WTC11 (cell line): ENCODE measurements at regions of chr16 and their contacts with region 1.

Region 1: DNA sequence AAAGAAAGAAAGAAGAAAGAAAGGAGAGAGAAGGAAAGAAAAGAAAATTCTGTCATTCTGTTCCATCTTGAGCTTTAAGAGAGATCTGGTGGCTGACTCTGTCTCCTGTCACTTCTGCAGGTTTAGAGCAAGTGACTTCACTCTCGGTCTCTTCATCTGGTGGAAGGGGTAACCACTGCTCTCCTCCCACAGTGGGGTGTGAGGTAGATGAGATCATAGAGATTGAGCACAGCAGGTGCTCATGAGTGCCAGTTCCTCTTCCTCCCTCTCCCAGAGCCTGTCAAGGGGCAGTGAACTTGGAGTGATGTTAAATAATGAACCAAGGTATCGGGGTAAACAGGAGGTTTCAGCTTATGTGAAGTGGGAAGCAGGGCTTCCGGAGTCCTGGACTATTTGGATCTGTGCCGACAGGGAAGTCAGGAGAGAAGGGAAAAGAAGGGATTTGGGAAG is 47.7 kb downstream of the BEAN1 start:
- DNase-seq: no peak
- ATAC-seq: no peak
- H3K4me3 Mint-ChIP-seq: no peak overlapping the region
- H3K27ac Mint-ChIP-seq: no peak overlapping the region
- H3K4me1 Mint-ChIP-seq: peaks cover 30% of the 10 kb centered on the region
- H3K27me3 Mint-ChIP-seq: peaks cover 8% of the 10 kb centered on the region; the same call in 1 of the 2 replicates
- CTCF ChIP-seq: no peak

Region 2: GRCh38 chr16:66382171-66382965 is 92.4 kb before region 1 on chr16:
- CTCF ChIA-PET with region 1: no interaction called
- POLR2A ChIA-PET with region 1: no interaction called
- DNase-seq: peak; percentile 16
- ATAC-seq: peak; percentile 63
- H3K4me3 Mint-ChIP-seq: no peak overlapping the region
- H3K27ac Mint-ChIP-seq: no peak overlapping the region; the same call in 1 of the 2 replicates
- H3K4me1 Mint-ChIP-seq: peaks cover 12% of the 10 kb centered on the region
- H3K27me3 Mint-ChIP-seq: no peaks in the 10 kb centered on the region
- CTCF ChIP-seq: no peak

Region 3: DNA sequence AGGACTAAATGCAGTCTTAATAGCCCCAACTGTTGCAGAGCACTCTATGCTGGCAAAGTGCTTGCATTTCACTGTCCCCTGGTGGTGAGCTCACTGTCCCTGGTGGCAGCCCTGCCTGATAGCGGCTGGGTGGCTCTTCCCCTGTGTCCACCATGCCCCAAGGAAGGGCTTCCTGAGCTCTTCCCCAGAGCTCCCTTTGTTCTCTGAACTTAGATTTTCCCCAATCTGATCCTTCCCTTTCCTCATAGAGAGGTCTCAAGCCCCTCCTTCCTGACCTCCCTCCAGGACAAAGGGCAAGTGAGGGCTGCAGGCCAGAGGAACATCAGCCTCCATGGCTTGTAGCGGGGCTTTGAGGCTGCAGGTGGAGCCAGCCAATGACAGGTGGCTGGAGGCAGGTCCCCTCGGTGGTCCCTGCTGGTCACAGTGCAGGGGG is 30.7 kb before region 1 on chr16:
- CTCF ChIA-PET with region 1: interaction called, 14 read pairs
- POLR2A ChIA-PET with region 1: no interaction called
- DNase-seq: no peak
- ATAC-seq: peak; percentile 81
- H3K4me3 Mint-ChIP-seq: no peak overlapping the region
- H3K27ac Mint-ChIP-seq: no peak overlapping the region
- H3K4me1 Mint-ChIP-seq: peaks cover 6% of the 10 kb centered on the region
- H3K27me3 Mint-ChIP-seq: peaks cover 9% of the 10 kb centered on the region; the same call in 1 of the 2 replicates
- CTCF ChIP-seq: no peak

Region 4: GRCh38 chr16:66515596-66516510 is 41.1 kb after region 1 on chr16:
- CTCF ChIA-PET with region 1: interaction called, 10 read pairs
- POLR2A ChIA-PET with region 1: no interaction called
- DNase-seq: peak; percentile 31
- ATAC-seq: peak; percentile 46
- H3K4me3 Mint-ChIP-seq: no peak overlapping the region
- H3K27ac Mint-ChIP-seq: peak overlapping the region; percentile 76
- H3K4me1 Mint-ChIP-seq: peaks cover 44% of the 10 kb centered on the region
- H3K27me3 Mint-ChIP-seq: no peaks in the 10 kb centered on the region
- CTCF ChIP-seq: 0 out of 2 replicates have a peak, but pooled peaks have one; percentile 17